ENCODE measurements at regions of chr10 and their contacts with region 1.

Region 1: DNA sequence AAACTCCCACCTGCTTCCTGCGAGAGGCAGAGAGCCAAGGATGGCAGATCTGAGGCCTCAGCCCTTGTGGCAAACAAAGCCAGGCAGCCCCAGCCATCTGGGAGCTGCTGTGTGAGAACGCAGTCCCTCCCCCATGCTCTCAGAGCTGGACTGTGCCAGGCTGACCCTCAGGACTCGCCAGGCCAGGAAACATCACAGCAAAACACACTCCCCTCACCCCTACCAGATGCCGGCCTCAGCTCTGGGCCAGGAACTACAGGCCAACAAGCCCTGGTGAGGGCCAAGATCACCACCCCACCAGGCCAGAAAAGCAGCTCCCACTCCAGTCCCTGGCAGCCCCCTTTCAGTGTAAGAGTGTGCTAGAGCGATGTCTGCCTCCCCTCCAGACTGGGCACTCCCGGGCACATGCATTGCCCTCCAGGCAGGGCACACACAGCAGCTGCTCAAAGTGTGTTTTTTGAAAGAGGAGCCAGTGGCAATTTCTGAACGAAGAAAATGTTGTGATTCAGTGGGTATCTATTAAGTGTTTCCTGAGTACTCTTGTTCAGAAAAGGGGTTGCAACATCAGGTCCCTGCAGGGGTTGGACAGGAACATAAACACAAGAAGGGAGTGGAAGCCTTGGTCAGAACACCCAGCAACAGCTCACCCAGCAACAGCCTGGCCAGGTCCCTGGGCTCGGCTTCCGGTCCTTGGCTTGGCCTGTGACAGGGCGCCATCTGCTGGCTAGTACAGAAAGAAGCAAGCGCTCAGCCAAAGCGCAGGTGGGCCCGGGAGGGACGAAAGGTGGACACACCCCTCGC is 18.3 kb downstream of the LRRC20 start:
- DNase-seq: peak; percentile 93 to 97 (median 95)
- ATAC-seq: peak; percentile 98 to 99
- H3K4me3 ChIP-seq: no peak overlapping the region
- H3K27ac ChIP-seq: peak overlapping the region; percentile 91
- H3K4me1 ChIP-seq: peaks cover 5% of the 10 kb centered on the region
- H3K27me3 ChIP-seq: no peaks in the 10 kb centered on the region

Region 2: DNA sequence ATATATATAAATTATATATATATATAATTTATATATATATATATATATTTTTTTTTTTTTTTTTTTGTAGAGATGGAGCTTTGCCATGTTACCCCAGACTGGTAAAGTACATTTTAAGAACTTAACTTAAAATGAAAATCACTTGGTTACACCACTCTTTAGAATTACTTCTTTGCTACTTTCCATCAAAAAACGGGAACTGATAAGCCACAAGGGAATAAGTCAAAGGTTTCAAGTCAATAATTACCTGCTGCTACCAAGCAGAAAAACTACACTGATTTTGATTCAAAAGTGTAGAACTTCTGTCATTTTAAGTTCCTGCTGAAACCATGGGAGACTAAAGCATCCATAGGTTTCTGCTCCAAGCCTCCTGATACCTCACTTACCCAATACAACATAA is 143.1 kb before region 1 on chr10:
- intact Hi-C with region 1: loop called (anchors 2 to 5 kb)
- DNase-seq: no peak
- ATAC-seq: no peak
- H3K4me3 ChIP-seq: no peak overlapping the region
- H3K27ac ChIP-seq: no peak overlapping the region
- H3K4me1 ChIP-seq: no peaks in the 10 kb centered on the region
- H3K27me3 ChIP-seq: no peaks in the 10 kb centered on the region

Region 3: DNA sequence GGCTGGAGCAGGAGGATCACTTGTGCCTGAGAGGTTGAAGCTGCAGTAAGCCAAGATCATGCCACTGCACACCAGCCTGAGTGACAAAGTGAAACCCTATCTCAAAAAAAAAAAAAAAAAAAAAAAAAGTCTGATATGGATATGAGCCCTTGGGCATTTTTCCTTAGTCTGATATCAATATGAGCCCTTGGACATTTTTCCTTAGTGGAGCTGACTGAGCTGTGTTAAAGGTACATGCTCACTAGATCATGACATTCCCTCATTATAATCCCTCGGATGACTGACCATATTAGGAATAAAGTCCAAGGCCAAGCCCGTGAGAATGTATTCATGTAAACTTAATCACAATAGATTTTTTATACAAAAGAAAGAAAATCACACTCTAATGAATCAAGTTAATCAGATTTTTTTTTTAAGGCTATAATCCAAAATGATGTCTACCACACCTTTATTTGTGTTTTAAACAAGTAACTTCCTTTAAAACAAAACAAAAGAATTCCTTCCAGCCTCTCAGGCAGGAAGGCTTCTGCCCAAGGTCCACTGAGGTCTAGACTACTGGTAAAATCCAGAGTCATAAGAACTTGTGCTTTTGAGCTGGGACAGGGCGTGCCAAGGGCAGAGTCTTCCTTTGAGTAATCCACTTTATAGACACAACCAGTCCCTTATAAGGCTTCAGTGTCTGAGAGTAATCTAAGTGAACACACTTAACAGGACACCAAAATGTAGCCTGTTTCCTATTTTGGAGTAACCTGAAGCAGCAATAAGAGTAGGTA is 136.4 kb before region 1 on chr10:
- intact Hi-C with region 1: loop called in 3 of 4 experiments (anchors 5 kb)
- DNase-seq: no peak
- ATAC-seq: peak; percentile 45 to 60
- H3K4me3 ChIP-seq: no peak overlapping the region
- H3K27ac ChIP-seq: no peak overlapping the region
- H3K4me1 ChIP-seq: peaks cover 3% of the 10 kb centered on the region
- H3K27me3 ChIP-seq: no peaks in the 10 kb centered on the region

Region 4: DNA sequence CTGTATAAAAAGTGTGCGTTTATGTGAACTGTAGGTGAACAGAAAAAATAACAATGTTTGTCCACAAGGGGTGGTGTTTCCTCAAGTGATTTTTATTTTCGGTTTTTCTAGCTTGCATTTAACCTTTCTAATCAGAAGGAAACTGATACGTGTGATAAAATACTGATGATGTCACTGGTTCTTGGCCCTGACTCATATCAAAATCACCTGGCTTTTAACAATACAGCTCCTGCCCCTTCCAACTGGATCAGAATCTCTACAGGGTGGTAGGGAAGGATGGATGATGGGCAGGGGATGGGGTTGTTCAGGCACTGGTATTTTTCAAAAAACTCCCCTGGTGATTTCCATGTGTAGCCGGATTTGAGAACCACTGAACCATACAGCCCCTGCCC is 91.2 kb before region 1 on chr10:
- intact Hi-C with region 1: loop called in 1 of 4 experiments (anchors 10 kb)
- DNase-seq: no peak
- ATAC-seq: peak in 1 of 2 donors; percentile 49
- H3K4me3 ChIP-seq: no peak overlapping the region
- H3K27ac ChIP-seq: no peak overlapping the region
- H3K4me1 ChIP-seq: no peaks in the 10 kb centered on the region
- H3K27me3 ChIP-seq: no peaks in the 10 kb centered on the region

Region 5: DNA sequence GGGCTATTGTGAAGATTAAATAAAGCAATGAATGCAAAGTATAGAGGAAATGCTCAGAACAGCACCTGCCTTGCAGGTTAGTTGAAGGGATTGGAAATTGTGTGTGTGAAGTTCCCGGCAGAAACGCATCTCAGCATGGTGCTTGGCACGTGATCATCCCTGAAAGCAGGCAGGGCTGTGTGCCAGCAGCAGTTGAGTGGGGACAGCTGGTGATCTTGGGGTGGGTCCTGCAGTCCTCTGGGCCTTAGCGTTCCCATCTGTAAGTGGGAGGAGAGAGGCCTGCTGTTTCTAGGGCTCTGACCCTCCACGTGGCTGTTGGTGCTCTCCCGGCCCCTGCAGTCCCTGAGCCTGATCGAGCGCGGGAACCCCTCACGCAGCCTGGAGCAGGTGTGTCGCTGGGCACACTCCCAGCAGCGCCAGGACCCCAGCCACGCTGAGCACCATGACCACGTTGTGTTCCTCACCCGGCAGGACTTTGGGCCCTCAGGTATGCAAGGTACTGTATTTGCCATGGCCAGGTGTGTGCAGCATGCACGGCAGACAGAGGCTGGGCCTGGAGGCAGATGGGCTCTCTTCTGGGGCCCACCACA is 365.7 kb after region 1 on chr10:
- intact Hi-C with region 1: no loop called
- DNase-seq: peak in 1 of 3 donors; percentile 68
- ATAC-seq: peak in 1 of 2 donors; percentile 12
- H3K4me3 ChIP-seq: no peak overlapping the region
- H3K27ac ChIP-seq: no peak overlapping the region
- H3K4me1 ChIP-seq: no peaks in the 10 kb centered on the region
- H3K27me3 ChIP-seq: no peaks in the 10 kb centered on the region